ENCODE measurements at regions of chr2 and their contacts with region 1.

Region 1: GRCh38 chr2:118112771-118113334 is 24.6 kb downstream of the INSIG2 start:
- DNase-seq: peak; percentile 94
- H3K4me3 ChIP-seq: no peak overlapping the region
- H3K27ac ChIP-seq: peak overlapping the region; percentile 88
- H3K4me1 ChIP-seq: peaks cover 44% of the 10 kb centered on the region
- H3K27me3 ChIP-seq: no peaks in the 10 kb centered on the region
- CTCF ChIP-seq: no peak

Region 2: DNA sequence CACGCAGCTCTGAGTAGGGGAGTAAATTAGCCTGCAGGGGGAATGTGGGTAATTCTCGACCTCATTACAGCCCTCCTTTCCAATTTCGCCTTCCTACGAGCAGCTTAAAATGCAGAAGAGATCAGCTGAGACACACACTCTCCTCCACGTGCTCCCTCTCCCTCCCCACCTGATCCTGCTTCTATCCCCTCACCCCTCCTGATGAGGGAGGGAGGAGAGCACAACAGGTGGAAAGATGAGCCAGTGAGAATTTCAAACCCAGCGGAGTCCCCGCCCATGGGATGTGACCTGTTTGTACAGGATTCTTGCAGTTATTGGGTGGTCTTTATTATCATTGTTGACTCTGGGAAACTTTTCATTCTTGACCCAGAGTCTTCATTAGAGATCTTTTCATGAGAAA is 262.8 kb before region 1 on chr2:
- CTCF ChIA-PET with region 1: no interaction called
- dilution Hi-C with region 1: no loop called
- in situ Hi-C with region 1: no loop called
- intact Hi-C with region 1: no loop called
- DNase-seq: no peak
- H3K4me3 ChIP-seq: no peak overlapping the region
- H3K27ac ChIP-seq: no peak overlapping the region
- H3K4me1 ChIP-seq: no peaks in the 10 kb centered on the region
- H3K27me3 ChIP-seq: peaks cover 10% of the 10 kb centered on the region
- CTCF ChIP-seq: no peak

Region 3: GRCh38 chr2:118102433-118103082 is 10.3 kb before region 1 on chr2:
- CTCF ChIA-PET with region 1: no interaction called
- dilution Hi-C with region 1: no loop called
- in situ Hi-C with region 1: no loop called
- intact Hi-C with region 1: loop called (anchors 1 kb)
- DNase-seq: peak; percentile 63
- H3K4me3 ChIP-seq: peak overlapping the region in 1 of 3 experiments; percentile 7
- H3K27ac ChIP-seq: peak overlapping the region; percentile 77
- H3K4me1 ChIP-seq: peaks cover 14% of the 10 kb centered on the region
- H3K27me3 ChIP-seq: no peaks in the 10 kb centered on the region
- CTCF ChIP-seq: no peak

Region 4: DNA sequence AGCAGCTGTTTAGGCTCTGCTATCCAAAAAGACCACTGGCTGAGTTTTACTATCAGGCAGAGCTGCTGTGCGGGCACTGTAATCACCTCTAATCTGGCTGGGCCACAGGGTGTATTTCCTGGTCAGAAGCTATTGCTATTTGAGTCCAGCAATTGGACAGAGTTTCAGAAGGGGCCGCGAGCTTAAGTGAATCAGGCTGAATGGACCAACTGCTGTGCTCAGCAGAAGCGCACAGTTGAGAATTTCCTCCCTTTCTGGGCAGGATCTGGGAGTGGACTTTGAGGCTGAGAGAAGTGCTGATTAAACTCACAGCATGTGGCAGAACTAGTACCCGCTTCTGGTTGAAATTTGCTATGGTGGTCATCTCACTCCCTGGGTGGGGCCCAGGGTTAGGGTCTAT is 227.2 kb after region 1 on chr2:
- CTCF ChIA-PET with region 1: no interaction called
- dilution Hi-C with region 1: no loop called
- in situ Hi-C with region 1: no loop called
- intact Hi-C with region 1: no loop called
- DNase-seq: no peak
- H3K4me3 ChIP-seq: no peak overlapping the region
- H3K27ac ChIP-seq: no peak overlapping the region
- H3K4me1 ChIP-seq: no peaks in the 10 kb centered on the region
- H3K27me3 ChIP-seq: peaks cover 2% of the 10 kb centered on the region
- CTCF ChIP-seq: no peak